Activated CD4-positive, alpha-beta memory T cell treated with anti-CD3 and anti-CD28 coated beads for 36 hours (primary cell): ENCODE measurements at regions of chr4 and their contacts with region 1.

Region 1: GRCh38 chr4:159206427-159206871 is 103.6 kb downstream of the RAPGEF2 start:
- DNase-seq: peak; percentile 74
- H3K4me3 Mint-ChIP-seq: peak overlapping the region; percentile 49
- H3K27ac Mint-ChIP-seq: peak overlapping the region; percentile 91
- H3K4me1 Mint-ChIP-seq: peaks cover 54% of the 10 kb centered on the region
- H3K27me3 Mint-ChIP-seq: no peaks in the 10 kb centered on the region

Region 2: GRCh38 chr4:158253350-158253980 is 953.0 kb before region 1 on chr4:
- CTCF ChIA-PET with region 1: no interaction called
- POLR2A ChIA-PET with region 1: no interaction called
- intact Hi-C with region 1: loop called (anchors 10 kb)
- DNase-seq: peak; percentile 49
- H3K4me3 Mint-ChIP-seq: no peak overlapping the region
- H3K27ac Mint-ChIP-seq: no peak overlapping the region
- H3K4me1 Mint-ChIP-seq: peaks cover 6% of the 10 kb centered on the region
- H3K27me3 Mint-ChIP-seq: peaks cover 9% of the 10 kb centered on the region

Region 3: DNA sequence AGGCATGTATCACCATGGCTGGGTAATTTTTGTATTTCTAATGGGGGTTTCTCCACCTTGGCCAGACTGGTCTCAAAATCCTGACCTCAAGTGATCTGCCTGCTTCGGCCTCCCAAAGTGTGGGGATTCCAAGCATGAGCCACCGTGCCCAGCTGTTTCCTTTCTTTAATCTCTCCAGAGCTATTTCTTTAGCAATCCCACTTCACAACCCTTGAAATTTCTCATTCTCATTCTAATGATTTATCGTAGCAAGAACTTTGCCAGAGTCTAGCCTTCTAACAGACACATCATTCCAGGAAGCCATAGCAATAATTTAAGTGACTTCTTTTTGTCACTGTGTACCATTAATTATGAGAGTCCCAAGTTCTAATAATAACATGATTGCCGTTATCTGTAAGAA is 616.1 kb before region 1 on chr4:
- CTCF ChIA-PET with region 1: no interaction called
- POLR2A ChIA-PET with region 1: no interaction called
- intact Hi-C with region 1: no loop called
- DNase-seq: no peak
- H3K4me3 Mint-ChIP-seq: no peak overlapping the region
- H3K27ac Mint-ChIP-seq: no peak overlapping the region
- H3K4me1 Mint-ChIP-seq: no peaks in the 10 kb centered on the region
- H3K27me3 Mint-ChIP-seq: peaks cover 4% of the 10 kb centered on the region

Region 4: GRCh38 chr4:158722917-158723793 is 483.3 kb before region 1 on chr4 and contains the start of gene PPID:
- CTCF ChIA-PET with region 1: no interaction called
- POLR2A ChIA-PET with region 1: no interaction called
- intact Hi-C with region 1: loop called (anchors 2 kb)
- DNase-seq: peak; percentile 91
- H3K4me3 Mint-ChIP-seq: peak within 1 kb of the TSS; percentile 93
- H3K27ac Mint-ChIP-seq: peak within 1 kb of the TSS; percentile 99
- H3K4me1 Mint-ChIP-seq: peaks cover 54% of the 10 kb centered on the region
- H3K27me3 Mint-ChIP-seq: peaks cover 8% of the 10 kb centered on the region
- total RNA-seq, gene PPID: 66.4 to 67.2 TPM

Region 5: GRCh38 chr4:158768555-158769174 is 437.8 kb before region 1 on chr4 and contains the start of gene FNIP2:
- CTCF ChIA-PET with region 1: no interaction called
- POLR2A ChIA-PET with region 1: no interaction called
- intact Hi-C with region 1: loop called (anchors 2 kb)
- DNase-seq: peak; percentile 73
- H3K4me3 Mint-ChIP-seq: peak within 1 kb of the TSS; percentile 100
- H3K27ac Mint-ChIP-seq: peak within 1 kb of the TSS; percentile 91
- H3K4me1 Mint-ChIP-seq: peaks cover 43% of the 10 kb centered on the region
- H3K27me3 Mint-ChIP-seq: peaks cover 2% of the 10 kb centered on the region
- total RNA-seq, gene FNIP2: 17.7 to 19.4 TPM

Region 6: GRCh38 chr4:158856852-158857251 is 349.6 kb before region 1 on chr4:
- CTCF ChIA-PET with region 1: interaction called, 46 read pairs
- POLR2A ChIA-PET with region 1: no interaction called
- intact Hi-C with region 1: loop called (anchors 1 kb)
- DNase-seq: no peak
- H3K4me3 Mint-ChIP-seq: no peak overlapping the region
- H3K27ac Mint-ChIP-seq: no peak overlapping the region
- H3K4me1 Mint-ChIP-seq: peaks cover 2% of the 10 kb centered on the region
- H3K27me3 Mint-ChIP-seq: no peaks in the 10 kb centered on the region

Region 7: GRCh38 chr4:159102622-159103383 is 103.6 kb before region 1 on chr4 and contains the start of gene RAPGEF2:
- CTCF ChIA-PET with region 1: interaction called, 3 read pairs
- POLR2A ChIA-PET with region 1: interaction called, 5 read pairs
- intact Hi-C with region 1: loop called (anchors 1 kb)
- DNase-seq: peak; percentile 91
- H3K4me3 Mint-ChIP-seq: peak within 1 kb of the TSS; percentile 79
- H3K27ac Mint-ChIP-seq: peak within 1 kb of the TSS; percentile 81
- H3K4me1 Mint-ChIP-seq: peaks cover 46% of the 10 kb centered on the region
- H3K27me3 Mint-ChIP-seq: peaks cover 5% of the 10 kb centered on the region
- total RNA-seq, gene RAPGEF2: 18.6 to 22.0 TPM

Region 8: DNA sequence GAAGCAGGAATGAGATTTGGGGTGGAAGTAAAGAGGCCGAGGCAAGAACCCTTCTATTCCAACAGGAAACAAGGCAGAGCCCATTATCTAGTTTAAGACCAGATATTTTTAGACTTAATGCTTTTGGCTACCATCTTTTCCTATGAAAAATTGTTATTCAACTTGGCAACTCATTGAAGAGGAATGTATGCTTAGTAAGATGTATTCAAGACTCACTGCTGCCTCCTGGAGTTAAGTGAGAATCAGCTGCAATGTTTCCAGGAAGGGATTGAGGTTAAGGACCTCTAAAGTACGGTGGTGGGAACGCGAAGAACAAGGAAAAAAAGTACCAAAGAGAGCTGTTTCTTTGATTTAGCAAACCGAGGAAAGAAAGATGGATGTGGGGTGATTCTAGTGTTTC is 14.5 kb before region 1 on chr4:
- CTCF ChIA-PET with region 1: interaction called, 18 read pairs
- POLR2A ChIA-PET with region 1: interaction called, 3 read pairs
- intact Hi-C with region 1: no loop called
- DNase-seq: no peak
- H3K4me3 Mint-ChIP-seq: no peak overlapping the region
- H3K27ac Mint-ChIP-seq: no peak overlapping the region
- H3K4me1 Mint-ChIP-seq: no peaks in the 10 kb centered on the region
- H3K27me3 Mint-ChIP-seq: no peaks in the 10 kb centered on the region